ENCODE measurements at regions of chr12 and their contacts with region 1.

Region 1: GRCh38 chr12:117836999-117837736 is 131.6 kb downstream of the KSR2 start:
- DNase-seq: peak; percentile 50 to 95 (median 78)
- ATAC-seq: peak; percentile 64 to 92 (median 84)
- H3K4me3 ChIP-seq: no peak overlapping the region
- H3K27ac ChIP-seq: no peak overlapping the region
- H3K4me1 ChIP-seq: no peaks in the 10 kb centered on the region
- H3K27me3 ChIP-seq: no peaks in the 10 kb centered on the region
- CTCF ChIP-seq: peak; percentile 91 to 98 (median 94)

Region 2: DNA sequence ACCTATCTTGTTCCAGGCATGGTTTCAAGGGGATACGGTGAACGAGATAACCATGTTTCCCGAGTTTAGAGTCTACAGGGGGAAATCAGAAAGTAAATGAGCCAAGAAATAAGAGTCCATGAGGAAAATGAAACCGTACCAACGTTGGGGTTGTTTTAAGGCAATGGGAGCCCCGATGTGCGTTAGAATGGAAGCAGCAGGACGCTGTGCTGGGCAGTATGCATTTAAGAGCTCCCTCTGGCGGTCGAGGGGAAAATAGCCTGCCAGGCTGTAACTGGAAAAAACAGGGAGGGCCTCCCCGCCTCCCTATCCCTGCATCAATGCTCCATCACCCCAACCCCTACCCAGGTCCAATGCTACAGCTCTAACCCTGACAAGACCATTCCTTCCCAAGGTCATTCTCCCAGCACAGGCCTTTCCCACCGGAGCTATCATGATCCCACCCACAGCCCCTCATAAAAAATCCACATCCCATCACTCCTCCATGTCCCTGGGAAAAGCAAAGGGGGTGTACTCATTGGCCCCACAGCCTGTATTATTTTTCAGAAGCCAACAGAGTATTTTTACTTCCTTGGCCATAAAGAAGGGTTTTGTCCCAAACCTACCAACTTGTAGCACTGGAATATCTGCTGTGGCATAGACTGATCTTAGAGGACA is 249.4 kb before region 1 on chr12:
- intact Hi-C with region 1: loop called in 1 of 3 experiments (anchors 10 kb)
- DNase-seq: peak; percentile 17 to 82 (median 62)
- ATAC-seq: peak; percentile 66 to 92 (median 85)
- H3K4me3 ChIP-seq: no peak overlapping the region
- H3K27ac ChIP-seq: no peak overlapping the region
- H3K4me1 ChIP-seq: no peaks in the 10 kb centered on the region
- H3K27me3 ChIP-seq: no peaks in the 10 kb centered on the region
- CTCF ChIP-seq: peak; percentile 58 to 77 (median 76)

Region 3: GRCh38 chr12:117803001-117803400 is 34.2 kb before region 1 on chr12:
- intact Hi-C with region 1: no loop called
- DNase-seq: peak in 4 of 6 donors; percentile 16 to 51 (median 38)
- ATAC-seq: peak; percentile 81 to 93 (median 90)
- H3K4me3 ChIP-seq: no peak overlapping the region
- H3K27ac ChIP-seq: peak overlapping the region; percentile 24 to 73 (median 68)
- H3K4me1 ChIP-seq: no peaks in the 10 kb centered on the region
- H3K27me3 ChIP-seq: no peaks in the 10 kb centered on the region
- CTCF ChIP-seq: no peak

Measured in pancreas (tissue), 10 donors.